PC-3 (cell line): ENCODE measurements at regions of chr6 and their contacts with region 1.

Region 1: GRCh38 chr6:78300885-78301284 is 566.5 kb upstream of the IRAK1BP1 start:
- DNase-seq: peak; percentile 10
- ATAC-seq: no peak
- H3K4me3 ChIP-seq: no peak overlapping the region
- H3K27ac ChIP-seq: no peak overlapping the region
- H3K4me1 ChIP-seq: no peaks in the 10 kb centered on the region
- H3K27me3 ChIP-seq: no peaks in the 10 kb centered on the region
- CTCF ChIP-seq: no peak

Region 2: GRCh38 chr6:78253618-78254017 is 47.3 kb before region 1 on chr6:
- CTCF ChIA-PET with region 1: no interaction called
- POLR2A ChIA-PET with region 1: no interaction called
- intact Hi-C with region 1: no loop called
- DNase-seq: no peak
- ATAC-seq: no peak
- H3K4me3 ChIP-seq: no peak overlapping the region
- H3K27ac ChIP-seq: no peak overlapping the region
- H3K4me1 ChIP-seq: no peaks in the 10 kb centered on the region
- H3K27me3 ChIP-seq: no peaks in the 10 kb centered on the region
- CTCF ChIP-seq: no peak

Region 3: GRCh38 chr6:78347191-78347916 is 46.5 kb after region 1 on chr6:
- CTCF ChIA-PET with region 1: no interaction called
- POLR2A ChIA-PET with region 1: no interaction called
- intact Hi-C with region 1: loop called (anchors 2 kb)
- DNase-seq: no peak
- ATAC-seq: no peak
- H3K4me3 ChIP-seq: no peak overlapping the region
- H3K27ac ChIP-seq: no peak overlapping the region
- H3K4me1 ChIP-seq: no peaks in the 10 kb centered on the region
- H3K27me3 ChIP-seq: no peaks in the 10 kb centered on the region
- CTCF ChIP-seq: no peak